OCI-LY7 (cell line): ENCODE measurements at regions of chr6 and their contacts with region 1.

Region 1: DNA sequence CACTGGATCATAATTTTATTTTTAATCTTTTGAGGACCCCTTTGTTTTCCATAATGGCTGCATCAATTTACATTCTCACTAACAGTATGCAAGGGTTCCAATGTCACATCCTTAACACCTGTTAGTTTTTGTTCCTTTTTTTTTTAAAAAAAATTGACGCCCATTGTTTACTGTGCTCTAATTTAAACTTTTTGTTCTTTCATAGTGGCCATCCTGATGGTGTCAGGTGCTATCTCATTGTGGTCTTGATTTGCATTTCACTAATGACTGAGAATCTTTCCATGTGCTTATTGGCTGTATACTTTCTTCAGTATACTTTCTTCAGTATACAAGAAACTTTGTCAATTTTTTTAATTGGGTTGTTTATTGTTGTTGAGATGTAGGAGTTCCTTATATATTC is 347.0 kb downstream of the RNGTT start:
- DNase-seq: peak; percentile 97
- H3K4me3 ChIP-seq: peak overlapping the region; percentile 63
- H3K27ac ChIP-seq: peak overlapping the region; percentile 95
- H3K4me1 ChIP-seq: peaks cover 88% of the 10 kb centered on the region
- CTCF ChIP-seq: no peak; the same call in 1 of the 2 replicates

Region 2: GRCh38 chr6:87756858-87757257 is 859.5 kb before region 1 on chr6:
- CTCF ChIA-PET with region 1: no interaction called
- POLR2A ChIA-PET with region 1: no interaction called
- intact Hi-C with region 1: loop called (anchors 5 kb)
- DNase-seq: peak; percentile 94
- H3K4me3 ChIP-seq: peak overlapping the region; percentile 23
- H3K27ac ChIP-seq: peak overlapping the region; percentile 78
- H3K4me1 ChIP-seq: peaks cover 49% of the 10 kb centered on the region
- CTCF ChIP-seq: no peak

Region 3: GRCh38 chr6:87907521-87907920 is 708.9 kb before region 1 on chr6:
- CTCF ChIA-PET with region 1: no interaction called
- POLR2A ChIA-PET with region 1: interaction called, 52 read pairs
- intact Hi-C with region 1: loop called (anchors 1 kb)
- DNase-seq: peak; percentile 72
- H3K4me3 ChIP-seq: no peak overlapping the region
- H3K27ac ChIP-seq: peak overlapping the region; percentile 99
- H3K4me1 ChIP-seq: peaks cover 98% of the 10 kb centered on the region
- CTCF ChIP-seq: no peak

Region 4: GRCh38 chr6:88165844-88166492 is 450.4 kb before region 1 on chr6 and contains the start of gene CNR1:
- CTCF ChIA-PET with region 1: no interaction called
- POLR2A ChIA-PET with region 1: interaction called, 19 read pairs
- intact Hi-C with region 1: loop called (anchors 2 kb)
- DNase-seq: peak; percentile 83
- H3K4me3 ChIP-seq: peak within 1 kb of the TSS; percentile 97
- H3K27ac ChIP-seq: peak within 1 kb of the TSS; percentile 80
- H3K4me1 ChIP-seq: peaks cover 45% of the 10 kb centered on the region
- CTCF ChIP-seq: peak; percentile 36; the same call in 1 of the 2 replicates
- total RNA-seq, gene CNR1: 109 and 150 TPM in 2 replicates

Region 5: GRCh38 chr6:88301888-88302768 is 314.3 kb before region 1 on chr6:
- CTCF ChIA-PET with region 1: no interaction called
- POLR2A ChIA-PET with region 1: no interaction called
- intact Hi-C with region 1: no loop called
- DNase-seq: no peak
- H3K4me3 ChIP-seq: no peak overlapping the region
- H3K27ac ChIP-seq: no peak overlapping the region
- H3K4me1 ChIP-seq: no peaks in the 10 kb centered on the region
- CTCF ChIP-seq: no peak

Region 6: DNA sequence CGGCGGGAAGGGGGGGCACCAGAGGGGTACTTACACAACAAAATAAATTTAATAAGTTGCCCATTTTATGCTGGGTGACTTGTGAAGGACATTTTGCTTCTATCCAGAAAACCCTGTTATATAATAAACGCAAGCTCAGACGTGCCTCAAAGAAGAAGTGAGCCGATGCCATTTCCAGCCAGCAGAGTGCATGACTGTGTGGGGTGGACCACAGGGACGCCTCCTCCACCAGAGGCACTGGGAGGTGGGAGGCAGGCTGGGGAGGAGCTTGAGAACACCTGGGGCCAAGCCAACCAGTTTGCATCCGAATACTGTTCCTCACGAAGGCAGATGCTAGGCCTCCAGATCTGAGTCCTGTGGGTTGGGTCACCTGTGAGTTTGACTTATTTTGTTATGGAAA is 16.8 kb before region 1 on chr6:
- CTCF ChIA-PET with region 1: interaction called, 4 read pairs
- POLR2A ChIA-PET with region 1: interaction called, 46 read pairs
- intact Hi-C with region 1: no loop called
- DNase-seq: peak; percentile 85
- H3K4me3 ChIP-seq: no peak overlapping the region
- H3K27ac ChIP-seq: peak overlapping the region; percentile 18
- H3K4me1 ChIP-seq: peaks cover 34% of the 10 kb centered on the region
- CTCF ChIP-seq: peak; percentile 76

Region 7: DNA sequence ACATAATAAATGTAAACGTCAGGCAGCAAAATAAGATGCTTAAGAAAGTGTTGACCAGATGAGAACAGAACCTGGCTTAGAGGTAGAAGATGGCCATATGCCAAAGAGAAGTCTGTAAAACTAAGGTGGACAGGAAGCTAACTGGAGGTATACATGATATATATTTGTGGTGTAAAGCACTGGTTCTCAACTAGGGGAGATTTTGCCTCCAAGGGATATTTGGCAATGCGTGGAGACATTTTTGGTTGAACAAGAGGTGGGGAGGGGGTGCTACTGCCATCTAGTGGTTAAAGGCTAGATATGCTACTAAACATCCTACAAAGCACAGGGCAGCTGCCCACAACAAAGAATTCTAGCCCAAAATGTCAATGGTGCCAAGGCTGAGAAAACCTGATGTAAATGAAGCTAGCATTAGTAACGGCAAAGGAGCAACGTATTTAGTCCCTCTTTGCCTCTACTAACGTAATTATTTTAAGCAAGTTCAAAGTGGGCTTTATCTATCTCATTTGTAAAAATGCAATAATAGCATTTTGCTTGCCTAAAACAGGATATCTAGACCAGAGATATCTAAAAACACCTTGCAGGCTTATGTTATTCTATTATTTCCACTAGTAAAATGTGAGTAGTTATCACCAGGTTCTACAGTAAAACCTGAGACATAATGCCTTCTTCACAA is 164.5 kb after region 1 on chr6:
- CTCF ChIA-PET with region 1: no interaction called
- POLR2A ChIA-PET with region 1: interaction called, 4 read pairs
- intact Hi-C with region 1: loop called (anchors 5 kb)
- DNase-seq: peak; percentile 89
- H3K4me3 ChIP-seq: no peak overlapping the region
- H3K27ac ChIP-seq: no peak overlapping the region
- H3K4me1 ChIP-seq: peaks cover 16% of the 10 kb centered on the region
- CTCF ChIP-seq: peak; percentile 98

Region 8: DNA sequence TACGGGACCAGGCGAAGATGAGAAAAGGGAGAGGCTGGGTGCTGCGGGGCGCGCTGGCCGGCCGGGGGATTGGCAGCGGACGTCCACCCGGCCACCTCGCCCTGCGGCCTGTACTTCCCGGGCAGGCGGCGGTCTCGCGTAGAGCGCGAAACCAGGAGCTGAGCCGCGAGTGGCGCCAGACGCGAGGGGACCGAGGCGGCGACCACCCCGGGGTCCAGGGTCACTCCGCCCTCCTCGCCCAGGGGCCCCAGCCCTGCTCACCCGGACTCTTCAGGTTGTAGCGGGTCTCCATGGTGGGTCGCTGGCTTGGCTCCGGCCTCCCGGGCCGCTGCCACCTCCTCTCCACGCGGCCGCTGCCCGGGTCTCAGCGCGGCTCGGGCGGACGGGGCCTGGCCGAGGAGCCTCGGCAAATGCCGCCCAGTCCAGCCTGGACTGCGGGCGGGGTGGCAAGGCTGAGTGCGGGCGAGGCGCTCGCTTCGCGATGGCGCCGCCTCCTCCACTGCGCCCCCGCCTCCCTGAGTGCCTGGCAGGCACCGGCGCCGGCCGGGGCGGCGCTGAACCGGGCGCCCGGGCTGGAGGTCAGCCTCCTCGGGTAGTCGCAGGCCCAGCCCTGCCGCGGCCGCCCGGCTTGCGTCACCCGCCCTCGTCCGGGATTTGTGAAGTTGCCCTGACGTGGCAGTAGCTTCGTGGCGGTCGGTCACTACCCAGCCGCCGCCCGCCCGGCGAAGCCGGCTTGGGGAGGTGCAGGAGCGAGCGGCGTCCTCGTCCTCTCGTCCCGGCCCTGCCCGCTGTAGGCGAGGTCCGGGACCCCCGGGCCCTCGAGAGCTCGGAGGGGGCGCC is 736.1 kb after region 1 on chr6 and contains the start of gene UBE2J1:
- CTCF ChIA-PET with region 1: no interaction called
- POLR2A ChIA-PET with region 1: interaction called, 5 read pairs
- intact Hi-C with region 1: loop called (anchors 1 kb)
- DNase-seq: peak; percentile 86
- H3K4me3 ChIP-seq: peak within 1 kb of the TSS; percentile 78
- H3K27ac ChIP-seq: peak within 1 kb of the TSS; percentile 99
- H3K4me1 ChIP-seq: peaks cover 69% of the 10 kb centered on the region
- CTCF ChIP-seq: no peak
- total RNA-seq, gene UBE2J1: 117 and 123 TPM in 2 replicates